HEK293T (cell line): ENCODE measurements at regions of chr1 and their contacts with region 1.

Region 1: GRCh38 chr1:202154766-202155477 is 5.5 kb downstream of the PTPN7 start:
- DNase-seq: peak; percentile 81

Region 2: DNA sequence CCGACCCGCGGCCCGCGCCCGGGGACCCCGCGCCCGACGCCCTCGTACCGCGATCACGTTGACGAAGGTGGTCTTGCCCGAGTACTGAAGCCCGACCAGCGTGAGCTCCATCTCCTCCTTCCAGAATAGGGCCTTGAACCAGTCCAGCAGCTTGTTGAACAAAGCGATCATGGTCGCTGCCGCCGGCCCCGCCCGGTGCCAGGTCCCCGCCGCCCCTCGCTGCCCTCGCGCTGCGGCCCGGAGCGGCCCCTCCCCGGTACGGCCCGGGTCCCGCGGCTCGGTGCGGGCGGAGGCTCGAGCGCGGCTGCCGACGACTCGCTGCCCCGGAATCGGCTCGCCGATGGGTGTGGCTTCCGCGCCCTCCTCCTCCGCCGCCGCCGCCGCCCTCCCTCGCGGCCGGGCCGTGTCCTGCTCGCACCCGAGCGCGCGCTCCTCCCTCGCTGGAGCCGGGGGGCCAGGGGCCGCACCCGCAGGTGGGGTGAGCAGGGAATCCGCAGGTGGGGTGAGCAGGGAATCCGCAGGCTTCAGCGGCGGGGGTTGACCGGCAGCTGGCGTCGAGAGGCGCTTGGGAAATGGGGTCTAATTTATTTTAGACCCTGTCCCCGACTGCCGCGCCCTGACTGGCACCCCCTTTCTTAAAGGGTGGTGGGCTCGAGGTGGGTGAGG is 10.4 kb before region 1 on chr1 and contains the start of gene ARL8A:
- CTCF ChIA-PET with region 1: interaction called, 13 read pairs
- POLR2A ChIA-PET with region 1: interaction called, 9 read pairs
- DNase-seq: peak; percentile 85